Activated CD4-positive, alpha-beta memory T cell treated with anti-CD3 and anti-CD28 coated beads for 36 hours (primary cell): ENCODE measurements at regions of chr4 and their contacts with region 1.

Region 1: GRCh38 chr4:16001484-16001858 is 38.5 kb upstream of the FGFBP2 start:
- DNase-seq: peak; percentile 58
- H3K4me3 Mint-ChIP-seq: no peak overlapping the region
- H3K27ac Mint-ChIP-seq: no peak overlapping the region
- H3K4me1 Mint-ChIP-seq: no peaks in the 10 kb centered on the region
- H3K27me3 Mint-ChIP-seq: peaks cover 6% of the 10 kb centered on the region

Region 2: DNA sequence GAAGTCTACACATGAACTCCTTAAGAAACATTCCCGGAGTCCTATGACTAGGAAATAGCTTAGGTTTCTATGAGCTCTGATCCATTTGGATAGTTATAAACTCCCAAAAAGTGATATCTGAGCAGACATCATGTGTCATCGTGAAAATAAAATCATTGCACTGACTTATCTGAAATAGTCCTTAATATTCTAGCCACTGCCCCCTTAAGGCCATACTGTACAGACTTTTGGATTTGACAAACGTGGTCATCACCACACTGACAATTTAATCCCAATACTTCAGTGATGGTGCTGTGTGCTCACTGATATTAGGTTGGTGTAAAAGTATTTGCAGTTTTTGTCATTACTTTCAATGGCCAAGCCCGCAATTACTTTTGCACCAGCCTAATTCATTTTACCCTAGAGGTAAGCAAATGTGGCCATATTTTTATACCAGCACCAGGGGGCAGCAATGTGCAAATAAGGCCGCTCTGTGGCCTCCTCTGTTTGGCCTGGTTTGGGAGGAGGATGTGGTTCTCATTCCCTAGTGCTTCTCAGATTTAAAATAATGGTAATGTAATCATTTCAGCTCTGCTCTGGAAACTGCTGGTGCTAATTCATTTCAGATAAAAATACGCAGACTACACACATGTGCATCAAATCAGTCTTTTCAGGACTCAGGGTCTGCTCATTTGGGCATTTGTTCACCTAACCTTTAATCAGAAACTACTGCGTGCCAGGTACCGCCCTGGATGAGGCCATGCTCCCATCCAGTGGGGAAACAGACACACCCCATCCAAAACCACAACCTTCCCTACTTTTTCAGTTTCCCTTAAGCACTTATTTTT is 770.0 kb before region 1 on chr4:
- CTCF ChIA-PET with region 1: no interaction called
- POLR2A ChIA-PET with region 1: no interaction called
- intact Hi-C with region 1: loop called (anchors 10 kb)
- DNase-seq: peak; percentile 81
- H3K4me3 Mint-ChIP-seq: no peak overlapping the region
- H3K27ac Mint-ChIP-seq: no peak overlapping the region
- H3K4me1 Mint-ChIP-seq: peaks cover 28% of the 10 kb centered on the region
- H3K27me3 Mint-ChIP-seq: no peaks in the 10 kb centered on the region

Region 3: DNA sequence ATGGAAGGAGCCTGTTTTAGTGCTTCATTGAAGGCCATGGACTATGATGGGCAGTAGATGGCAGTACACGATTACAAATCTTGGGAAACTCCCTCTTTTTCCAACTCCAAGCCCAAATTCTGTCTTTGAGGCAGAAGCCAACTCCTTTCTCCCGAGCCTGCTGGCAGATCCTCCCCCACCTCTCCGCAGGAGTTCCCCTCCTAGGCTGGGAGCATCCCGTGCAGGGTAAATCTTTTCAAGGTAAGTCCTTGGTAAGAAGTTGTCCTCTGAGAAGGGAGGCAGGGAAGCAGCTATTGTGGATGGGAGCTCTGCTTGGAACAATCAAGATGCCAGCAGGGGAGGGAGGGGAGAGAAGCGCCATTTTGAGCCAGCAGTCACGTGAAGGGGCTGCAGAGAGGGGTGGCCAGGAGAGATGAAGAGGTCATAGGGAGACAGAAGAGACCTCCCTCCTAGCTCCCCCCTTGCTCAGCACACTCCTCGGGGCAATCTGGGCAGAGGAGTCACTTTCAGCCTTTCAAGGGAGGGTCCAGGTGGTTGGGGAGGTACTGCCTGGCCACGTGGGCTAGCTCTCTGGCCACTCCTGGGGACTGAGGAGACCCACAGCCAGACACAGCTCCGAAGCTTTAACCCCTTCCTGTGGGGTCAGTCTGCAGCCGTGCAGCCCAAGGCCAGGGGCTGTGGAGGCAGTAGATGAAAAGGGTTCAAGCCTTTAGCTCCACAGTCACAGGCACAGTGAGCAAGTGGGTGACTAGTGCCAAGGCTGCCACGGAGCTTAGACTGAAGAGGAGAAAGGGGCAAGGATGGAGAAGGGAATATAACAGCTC is 522.2 kb before region 1 on chr4:
- CTCF ChIA-PET with region 1: no interaction called
- POLR2A ChIA-PET with region 1: no interaction called
- intact Hi-C with region 1: loop called (anchors 5 kb)
- DNase-seq: no peak
- H3K4me3 Mint-ChIP-seq: no peak overlapping the region
- H3K27ac Mint-ChIP-seq: no peak overlapping the region
- H3K4me1 Mint-ChIP-seq: no peaks in the 10 kb centered on the region
- H3K27me3 Mint-ChIP-seq: no peaks in the 10 kb centered on the region

Region 4: GRCh38 chr4:15729910-15730533 is 271.4 kb before region 1 on chr4:
- CTCF ChIA-PET with region 1: interaction called, 3 read pairs
- POLR2A ChIA-PET with region 1: no interaction called
- intact Hi-C with region 1: loop called (anchors 1 kb)
- DNase-seq: peak; percentile 15
- H3K4me3 Mint-ChIP-seq: no peak overlapping the region
- H3K27ac Mint-ChIP-seq: no peak overlapping the region
- H3K4me1 Mint-ChIP-seq: no peaks in the 10 kb centered on the region
- H3K27me3 Mint-ChIP-seq: peaks cover 2% of the 10 kb centered on the region

Region 5: GRCh38 chr4:15805583-15806517 is 195.6 kb before region 1 on chr4:
- CTCF ChIA-PET with region 1: interaction called, 52 read pairs
- POLR2A ChIA-PET with region 1: no interaction called
- intact Hi-C with region 1: loop called (anchors 1 kb)
- DNase-seq: peak; percentile 43
- H3K4me3 Mint-ChIP-seq: no peak overlapping the region
- H3K27ac Mint-ChIP-seq: no peak overlapping the region
- H3K4me1 Mint-ChIP-seq: peaks cover 12% of the 10 kb centered on the region
- H3K27me3 Mint-ChIP-seq: no peaks in the 10 kb centered on the region

Region 6: GRCh38 chr4:15956179-15956850 is 45.2 kb before region 1 on chr4:
- CTCF ChIA-PET with region 1: interaction called, 23 read pairs
- POLR2A ChIA-PET with region 1: no interaction called
- intact Hi-C with region 1: no loop called
- DNase-seq: peak; percentile 87
- H3K4me3 Mint-ChIP-seq: no peak overlapping the region
- H3K27ac Mint-ChIP-seq: no peak overlapping the region
- H3K4me1 Mint-ChIP-seq: no peaks in the 10 kb centered on the region
- H3K27me3 Mint-ChIP-seq: peaks cover 4% of the 10 kb centered on the region

Region 7: GRCh38 chr4:15963001-15963451 is 38.4 kb before region 1 on chr4 and contains the start of gene FGFBP2:
- CTCF ChIA-PET with region 1: interaction called, 23 read pairs
- POLR2A ChIA-PET with region 1: no interaction called
- intact Hi-C with region 1: loop called (anchors 1 kb)
- DNase-seq: peak; percentile 71
- H3K4me3 Mint-ChIP-seq: no peak within 1 kb of the TSS
- H3K27ac Mint-ChIP-seq: no peak within 1 kb of the TSS
- H3K4me1 Mint-ChIP-seq: peaks cover 8% of the 10 kb centered on the region
- H3K27me3 Mint-ChIP-seq: peaks cover 4% of the 10 kb centered on the region
- total RNA-seq, gene FGFBP2: 0.43 to 0.51 TPM